ENCODE measurements at regions of chr1 and their contacts with region 1.

Region 1: DNA sequence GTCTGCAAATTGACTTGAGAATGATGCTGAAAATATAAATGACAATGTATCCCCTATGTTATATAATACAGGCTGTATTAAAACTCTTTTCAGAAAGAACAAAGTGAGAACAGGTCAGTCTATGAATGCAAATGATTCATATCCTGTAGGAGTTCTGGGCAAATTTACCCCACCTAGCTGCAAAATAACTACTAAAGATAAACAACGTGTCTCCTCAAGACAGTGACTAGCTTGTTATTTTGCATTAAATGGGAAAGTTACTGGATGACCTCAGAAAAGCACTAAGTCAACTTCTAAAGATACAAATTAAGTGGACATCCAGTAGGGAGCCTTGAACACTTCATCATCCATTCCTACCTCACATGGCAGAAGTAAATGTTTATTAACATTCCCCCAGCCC is 11.1 kb downstream of the RNF19B start:
- DNase-seq: no peak
- H3K4me3 ChIP-seq: no peak overlapping the region
- CTCF ChIP-seq: no peak

Region 2: DNA sequence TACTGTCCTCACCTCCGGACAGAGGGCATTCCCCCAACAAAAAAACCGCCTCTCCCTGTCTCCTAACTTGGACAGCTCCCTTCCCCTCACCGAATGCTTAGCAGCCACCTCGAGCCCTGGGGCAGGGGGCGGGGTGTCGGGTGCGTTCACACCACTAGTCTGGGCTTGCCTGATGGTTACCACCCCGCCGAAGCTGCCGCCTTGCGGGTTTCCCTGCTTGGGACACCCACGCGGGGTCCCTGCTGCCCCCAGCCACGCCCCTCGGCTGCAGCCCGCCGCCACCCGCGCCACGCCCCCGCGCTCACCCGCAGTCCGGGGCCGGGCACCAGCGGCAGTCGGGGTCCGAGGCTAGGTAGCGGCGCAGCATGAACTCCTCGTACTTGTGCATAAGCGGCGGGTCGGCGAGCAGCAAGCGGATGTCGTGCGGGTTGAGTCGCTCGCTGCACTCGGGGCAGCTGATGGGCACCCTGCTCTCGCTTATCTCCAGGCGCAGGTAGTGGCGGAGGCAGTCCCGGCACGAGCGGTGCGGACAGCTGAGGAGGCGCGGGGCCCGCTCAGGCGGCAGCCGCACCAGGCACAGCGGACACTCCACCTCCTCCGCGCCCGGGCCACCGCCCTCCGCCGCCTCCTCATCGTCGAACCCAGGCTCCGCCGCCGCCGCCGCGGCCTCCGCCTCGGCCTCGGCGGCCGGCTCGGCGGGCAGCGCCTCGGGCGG is 10.4 kb after region 1 on chr1:
- CTCF ChIA-PET with region 1: interaction called, 11 read pairs
- POLR2A ChIA-PET with region 1: interaction called, 5 read pairs
- DNase-seq: no peak
- H3K4me3 ChIP-seq: peak overlapping the region; percentile 87
- CTCF ChIP-seq: no peak